ENCODE measurements at regions of chr20 and their contacts with region 1.

Region 1: GRCh38 chr20:4666001-4666479 is 55.7 kb upstream of the PRND start:
- DNase-seq: peak; percentile 88 to 97 (median 93)
- H3K4me3 ChIP-seq: peak overlapping the region; percentile 20 to 56 (median 42)
- H3K4me3 Mint-ChIP-seq: peak overlapping the region; percentile 64 to 86
- H3K27ac ChIP-seq: peak overlapping the region; percentile 84 to 93
- H3K27ac Mint-ChIP-seq: peak overlapping the region; percentile 91 to 100 (median 98)
- H3K4me1 ChIP-seq: peaks cover 47 to 48% of the 10 kb centered on the region in 2 donors
- H3K4me1 Mint-ChIP-seq: peaks cover 56% of the 10 kb centered on the region
- H3K27me3 ChIP-seq: no peaks in the 10 kb centered on the region
- H3K27me3 Mint-ChIP-seq: peaks cover 0 to 4% (median 0%) of the 10 kb centered on the region in 3 donors
- CTCF ChIP-seq: no peak

Region 2: GRCh38 chr20:4613718-4614620 is 52.1 kb before region 1 on chr20:
- intact Hi-C with region 1: loop called in 1 of 2 experiments (anchors 10 kb)
- DNase-seq: peak; percentile 35 to 68 (median 59)
- H3K4me3 ChIP-seq: peak overlapping the region in 1 of 3 experiments; percentile 26
- H3K4me3 Mint-ChIP-seq: peak overlapping the region; percentile 20 to 66
- H3K27ac ChIP-seq: no peak overlapping the region
- H3K27ac Mint-ChIP-seq: peak overlapping the region in 5 of 7 donors; percentile 51 to 85 (median 66)
- H3K4me1 ChIP-seq: peaks cover 14 to 22% of the 10 kb centered on the region in 2 donors
- H3K4me1 Mint-ChIP-seq: peaks cover 19% of the 10 kb centered on the region
- H3K27me3 ChIP-seq: no peaks in the 10 kb centered on the region
- H3K27me3 Mint-ChIP-seq: peaks cover 0 to 8% (median 5%) of the 10 kb centered on the region in 3 donors
- CTCF ChIP-seq: peak; percentile 48

Region 3: GRCh38 chr20:4633780-4634179 is 32.3 kb before region 1 on chr20:
- intact Hi-C with region 1: loop called in 1 of 2 experiments (anchors 5 kb)
- DNase-seq: peak; percentile 51 to 77 (median 70)
- H3K4me3 ChIP-seq: peak overlapping the region in 1 of 3 experiments; percentile 50
- H3K4me3 Mint-ChIP-seq: no peak overlapping the region
- H3K27ac ChIP-seq: peak overlapping the region; percentile 54 to 77
- H3K27ac Mint-ChIP-seq: no peak overlapping the region
- H3K4me1 ChIP-seq: peaks cover 30 to 31% of the 10 kb centered on the region in 2 donors
- H3K4me1 Mint-ChIP-seq: peaks cover 13% of the 10 kb centered on the region
- H3K27me3 ChIP-seq: no peaks in the 10 kb centered on the region
- H3K27me3 Mint-ChIP-seq: peaks cover 0 to 7% (median 4%) of the 10 kb centered on the region in 3 donors
- CTCF ChIP-seq: no peak

Measured in CD14-positive monocyte (primary cell).